Endothelial cell of umbilical vein (primary cell): ENCODE measurements at regions of chr22 and their contacts with region 1.

Region 1: DNA sequence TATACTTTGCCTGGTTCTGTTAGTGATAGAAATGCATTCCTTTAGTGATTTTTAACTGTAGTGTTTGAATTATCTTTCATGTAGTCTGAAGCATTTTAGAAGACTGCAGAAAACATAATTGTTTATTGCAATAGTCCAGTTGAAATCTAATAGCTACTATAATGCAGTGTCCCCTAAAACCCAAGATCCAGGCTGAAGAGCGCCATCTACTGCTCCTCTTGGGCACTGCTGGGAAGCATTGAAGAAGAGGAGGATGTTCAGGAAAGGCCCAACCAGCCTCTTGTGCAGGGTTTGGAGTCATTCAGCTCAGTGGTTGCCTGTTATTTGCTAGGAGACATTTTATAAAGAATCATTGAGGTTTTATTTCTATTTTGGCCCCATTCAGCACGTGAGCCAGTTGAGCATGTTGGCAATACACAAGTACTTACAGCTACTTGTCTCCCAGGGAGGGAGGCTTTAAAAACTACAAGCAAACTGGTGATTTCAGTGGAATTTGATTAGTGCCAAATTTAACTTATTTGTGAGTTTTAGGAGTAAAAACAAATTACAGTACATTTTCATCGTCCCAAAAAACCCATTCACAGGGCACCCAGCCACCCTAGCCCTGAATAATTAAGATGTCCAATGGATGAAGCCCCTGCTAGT is 74.9 kb upstream of the HORMAD2 start:
- DNase-seq: peak; percentile 77
- H3K4me3 ChIP-seq: no peak overlapping the region
- H3K27ac ChIP-seq: no peak overlapping the region
- H3K4me1 ChIP-seq: peaks cover 4% of the 10 kb centered on the region
- H3K27me3 ChIP-seq: no peaks in the 10 kb centered on the region
- CTCF ChIP-seq: peak; percentile 85 to 98
- POLR2A ChIP-seq: no peak

Region 2: GRCh38 chr22:29701155-29701999 is 304.0 kb before region 1 on chr22:
- CTCF ChIA-PET with region 1: interaction called, 30 read pairs
- POLR2A ChIA-PET with region 1: no interaction called
- dilution Hi-C with region 1: no loop called
- intact Hi-C with region 1: no loop called
- DNase-seq: peak; percentile 22
- H3K4me3 ChIP-seq: no peak overlapping the region
- H3K27ac ChIP-seq: no peak overlapping the region
- H3K4me1 ChIP-seq: peaks cover 10% of the 10 kb centered on the region
- H3K27me3 ChIP-seq: peaks cover 15% of the 10 kb centered on the region in 2 experiments
- CTCF ChIP-seq: peak; percentile 8 to 36
- POLR2A ChIP-seq: no peak

Region 3: GRCh38 chr22:29798801-29799680 is 206.3 kb before region 1 on chr22:
- CTCF ChIA-PET with region 1: interaction called, 16 read pairs
- POLR2A ChIA-PET with region 1: no interaction called
- dilution Hi-C with region 1: no loop called
- intact Hi-C with region 1: no loop called
- DNase-seq: peak; percentile 88
- H3K4me3 ChIP-seq: no peak overlapping the region
- H3K27ac ChIP-seq: peak overlapping the region; percentile 50
- H3K4me1 ChIP-seq: peaks cover 14% of the 10 kb centered on the region
- H3K27me3 ChIP-seq: no peaks in the 10 kb centered on the region
- CTCF ChIP-seq: no peak
- POLR2A ChIP-seq: no peak

Region 4: DNA sequence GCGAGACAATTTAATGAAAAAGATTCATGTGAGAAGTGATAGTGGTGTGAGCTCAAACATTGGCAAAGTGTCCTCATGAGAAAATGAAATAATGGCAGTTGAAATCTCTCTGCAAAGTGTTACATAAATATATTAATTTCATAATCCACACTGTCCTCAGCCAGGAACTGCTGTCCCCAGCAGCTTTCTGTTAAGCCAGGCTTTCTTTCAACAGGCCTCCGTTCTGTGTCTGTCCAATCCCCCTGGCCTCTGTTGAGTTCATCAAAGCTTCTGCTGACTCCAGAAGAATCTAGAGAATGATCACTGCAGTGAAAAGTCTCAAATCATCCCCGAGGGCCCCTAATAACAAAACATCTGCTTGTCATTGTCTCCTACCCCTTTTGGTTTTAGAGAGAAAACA is 157.2 kb before region 1 on chr22:
- CTCF ChIA-PET with region 1: interaction called, 10 read pairs
- POLR2A ChIA-PET with region 1: no interaction called
- dilution Hi-C with region 1: no loop called
- intact Hi-C with region 1: no loop called
- DNase-seq: no peak
- H3K4me3 ChIP-seq: no peak overlapping the region
- H3K27ac ChIP-seq: no peak overlapping the region
- H3K4me1 ChIP-seq: no peaks in the 10 kb centered on the region
- H3K27me3 ChIP-seq: peaks cover 0 to 5% of the 10 kb centered on the region in 2 experiments
- CTCF ChIP-seq: no peak
- POLR2A ChIP-seq: no peak

Region 5: GRCh38 chr22:29994027-29994715 is 11.2 kb before region 1 on chr22:
- CTCF ChIA-PET with region 1: interaction called, 22 read pairs
- POLR2A ChIA-PET with region 1: no interaction called
- dilution Hi-C with region 1: no loop called
- intact Hi-C with region 1: no loop called
- DNase-seq: peak; percentile 26
- H3K4me3 ChIP-seq: no peak overlapping the region
- H3K27ac ChIP-seq: peak overlapping the region; percentile 47
- H3K4me1 ChIP-seq: peaks cover 15% of the 10 kb centered on the region
- H3K27me3 ChIP-seq: no peaks in the 10 kb centered on the region
- CTCF ChIP-seq: no peak
- POLR2A ChIP-seq: no peak

Region 6: DNA sequence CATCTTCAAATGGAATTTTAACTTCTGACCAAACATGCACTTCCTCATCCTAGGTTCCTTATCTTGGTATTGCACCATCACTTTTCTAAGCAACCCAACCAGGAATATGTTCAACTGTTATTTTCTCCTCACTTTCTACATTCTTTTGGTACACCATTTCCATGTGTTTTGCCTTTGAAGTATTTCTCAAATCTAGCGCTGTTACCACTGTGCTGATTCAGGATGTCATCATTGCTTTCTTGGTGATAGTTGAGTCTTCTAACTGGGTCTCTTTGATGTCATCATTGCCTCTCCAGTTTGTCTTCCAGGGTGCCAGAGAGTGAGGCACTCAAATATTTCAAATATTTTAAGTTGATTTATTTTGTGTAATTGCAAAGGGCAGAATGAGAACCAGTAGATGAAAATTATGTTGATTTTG is 122.4 kb after region 1 on chr22:
- CTCF ChIA-PET with region 1: no interaction called
- POLR2A ChIA-PET with region 1: no interaction called
- dilution Hi-C with region 1: no loop called
- intact Hi-C with region 1: no loop called
- DNase-seq: no peak
- H3K4me3 ChIP-seq: no peak overlapping the region
- H3K27ac ChIP-seq: no peak overlapping the region
- H3K4me1 ChIP-seq: no peaks in the 10 kb centered on the region
- H3K27me3 ChIP-seq: peaks cover 13 to 16% of the 10 kb centered on the region in 2 experiments
- CTCF ChIP-seq: no peak
- POLR2A ChIP-seq: no peak

Region 7: GRCh38 chr22:30143265-30143664 is 137.9 kb after region 1 on chr22:
- CTCF ChIA-PET with region 1: no interaction called
- POLR2A ChIA-PET with region 1: no interaction called
- dilution Hi-C with region 1: no loop called
- intact Hi-C with region 1: no loop called
- DNase-seq: no peak
- H3K4me3 ChIP-seq: no peak overlapping the region
- H3K27ac ChIP-seq: no peak overlapping the region
- H3K4me1 ChIP-seq: no peaks in the 10 kb centered on the region
- H3K27me3 ChIP-seq: peaks cover 31 to 63% of the 10 kb centered on the region in 2 experiments
- CTCF ChIP-seq: no peak
- POLR2A ChIP-seq: no peak